ENCODE measurements at regions of chr4 and their contacts with region 1.

Region 1: GRCh38 chr4:53377319-53378170 is at the start of gene FIP1L1:
- DNase-seq: peak; percentile 95
- ATAC-seq: peak; percentile 98
- H3K4me3 Mint-ChIP-seq: peak within 1 kb of the TSS; percentile 99
- H3K27ac Mint-ChIP-seq: peak within 1 kb of the TSS; percentile 99
- H3K4me1 Mint-ChIP-seq: peaks cover 37% of the 10 kb centered on the region
- H3K27me3 Mint-ChIP-seq: peaks cover 8% of the 10 kb centered on the region
- total RNA-seq, gene FIP1L1: 70.9 to 72.9 TPM

Region 2: DNA sequence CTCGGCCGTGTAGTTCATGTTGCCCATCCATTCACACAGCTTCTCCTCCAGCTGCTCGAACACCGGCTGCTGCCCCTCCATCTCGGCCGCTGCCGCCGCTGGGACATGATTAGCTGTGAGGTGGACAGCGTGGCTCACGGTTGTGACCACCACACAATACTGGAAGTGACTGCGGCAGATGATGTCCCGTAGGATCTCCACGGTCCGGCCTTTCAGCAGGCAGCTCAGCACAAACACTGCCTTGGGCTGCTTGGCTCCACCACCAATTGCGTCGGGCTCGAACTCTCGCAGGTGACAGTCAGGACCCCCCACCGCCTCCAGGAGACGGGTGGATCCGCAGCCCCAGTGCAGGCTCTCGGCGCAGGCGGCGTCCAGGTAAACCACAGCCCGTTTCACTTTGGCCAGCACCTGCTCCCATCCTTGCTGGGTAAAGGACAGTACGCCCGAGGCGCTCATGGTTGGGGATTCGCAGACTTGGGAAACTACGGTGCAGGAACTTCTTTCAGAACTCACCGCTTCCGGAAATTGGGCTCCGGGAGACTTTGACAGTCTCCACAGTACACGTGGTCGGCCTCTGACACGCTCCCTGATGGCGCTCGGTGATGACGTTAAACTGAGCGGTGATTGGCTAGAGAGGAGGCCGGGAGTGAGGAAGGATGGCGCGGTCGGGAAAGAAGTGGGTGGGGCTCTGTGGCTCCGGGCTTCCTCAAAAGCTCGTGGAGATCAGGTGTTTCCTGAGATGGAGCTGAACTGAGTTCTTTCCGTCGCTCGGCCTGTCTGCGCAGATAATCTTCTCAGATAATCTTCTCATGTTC is 11.9 kb before region 1 on chr4 and contains the start of gene SCFD2:
- CTCF ChIA-PET with region 1: interaction called, 4 read pairs
- POLR2A ChIA-PET with region 1: interaction called, 21 read pairs
- DNase-seq: peak; percentile 98
- ATAC-seq: peak; percentile 98
- H3K4me3 Mint-ChIP-seq: peak within 1 kb of the TSS; percentile 94
- H3K27ac Mint-ChIP-seq: peak within 1 kb of the TSS; percentile 93
- H3K4me1 Mint-ChIP-seq: peaks cover 35% of the 10 kb centered on the region
- H3K27me3 Mint-ChIP-seq: peaks cover 8% of the 10 kb centered on the region
- total RNA-seq, gene SCFD2: 25.1 to 27.2 TPM

Region 3: GRCh38 chr4:53459548-53459947 is 82.0 kb after region 1 on chr4:
- CTCF ChIA-PET with region 1: no interaction called
- POLR2A ChIA-PET with region 1: no interaction called
- DNase-seq: no peak
- ATAC-seq: no peak
- H3K4me3 Mint-ChIP-seq: no peak overlapping the region
- H3K27ac Mint-ChIP-seq: no peak overlapping the region
- H3K4me1 Mint-ChIP-seq: no peaks in the 10 kb centered on the region
- H3K27me3 Mint-ChIP-seq: no peaks in the 10 kb centered on the region

Region 4: GRCh38 chr4:53653484-53654053 is 276.0 kb after region 1 on chr4:
- CTCF ChIA-PET with region 1: no interaction called
- POLR2A ChIA-PET with region 1: no interaction called
- DNase-seq: no peak
- ATAC-seq: no peak
- H3K4me3 Mint-ChIP-seq: no peak overlapping the region
- H3K27ac Mint-ChIP-seq: no peak overlapping the region
- H3K4me1 Mint-ChIP-seq: no peaks in the 10 kb centered on the region
- H3K27me3 Mint-ChIP-seq: peaks cover 2% of the 10 kb centered on the region

Measured in activated CD8-positive, alpha-beta T cell treated with anti-CD3 and anti-CD28 coated beads, Interleukin-2, amount 10 ng/mL, durations not matched to agents 7 days and 5 days (primary cell).